T-cell (primary cell): ENCODE measurements at regions of chr3 and their contacts with region 1.

Region 1: DNA sequence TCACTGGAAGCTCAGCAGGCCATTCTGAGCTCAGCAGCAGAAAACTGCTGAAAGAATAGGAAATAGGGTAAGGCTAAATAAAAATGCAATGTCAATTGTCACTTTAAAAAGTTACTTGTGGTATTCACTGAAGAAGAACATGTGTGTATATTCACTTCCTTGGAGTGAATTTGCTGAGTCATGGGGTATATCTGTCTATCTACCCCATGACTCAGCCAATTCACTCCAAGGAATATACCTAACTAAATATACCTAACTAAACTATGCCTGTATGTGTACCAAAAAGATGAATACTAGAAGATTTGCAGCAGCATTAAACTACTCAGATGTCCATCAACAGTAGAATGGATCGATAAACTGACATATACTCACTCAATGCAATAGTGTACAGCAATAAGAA is 69.5 kb upstream of the KCNAB1 start:
- DNase-seq: no peak
- ATAC-seq: no peak
- H3K4me3 ChIP-seq: no peak overlapping the region
- H3K4me3 Mint-ChIP-seq: no peak overlapping the region
- H3K27ac ChIP-seq: no peak overlapping the region
- H3K27ac Mint-ChIP-seq: no peak overlapping the region
- H3K4me1 ChIP-seq: no peaks in the 10 kb centered on the region
- H3K4me1 Mint-ChIP-seq: no peaks in the 10 kb centered on the region
- H3K27me3 ChIP-seq: peaks cover 0 to 4% of the 10 kb centered on the region in 2 experiments
- H3K27me3 Mint-ChIP-seq: peaks cover 17 to 27% of the 10 kb centered on the region in 2 donors

Region 2: DNA sequence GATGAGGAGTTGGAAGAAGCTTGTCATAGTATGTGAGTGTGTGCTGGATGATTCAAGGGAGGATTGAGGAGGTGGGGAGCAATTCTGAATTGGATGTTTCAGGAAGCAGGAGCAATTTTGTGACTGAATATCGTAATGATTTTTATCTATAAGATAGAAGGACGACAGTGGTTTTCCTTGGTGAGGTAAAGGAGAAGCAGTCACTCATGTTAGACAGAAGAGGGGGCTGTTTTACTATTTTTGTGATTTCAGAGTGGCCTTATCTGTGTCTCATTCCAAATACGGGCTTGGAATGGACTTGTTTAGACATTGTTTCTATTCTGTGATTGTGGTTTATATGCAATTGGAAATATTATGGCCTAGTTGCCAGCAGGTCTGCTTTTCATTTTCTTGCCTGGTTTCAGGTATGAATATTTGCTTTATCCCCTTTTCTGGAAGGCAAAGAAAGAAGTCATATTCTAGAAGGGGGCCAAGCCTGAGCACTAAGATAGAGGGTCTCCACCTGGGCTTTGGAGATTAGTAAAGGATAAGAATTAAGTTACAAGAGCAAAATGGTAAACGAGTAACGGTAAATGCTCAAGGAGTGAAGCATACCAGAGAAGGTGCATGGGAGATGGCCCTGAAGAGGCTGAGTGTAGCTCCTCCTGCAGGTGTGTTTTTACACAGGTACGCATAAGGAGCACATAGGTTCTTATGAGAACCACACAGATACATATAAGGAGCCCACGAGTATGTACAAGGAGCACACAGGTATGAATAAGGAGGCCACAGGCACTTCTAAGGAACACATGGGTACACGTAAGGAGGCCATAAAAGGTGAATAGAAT is 55.2 kb before region 1 on chr3:
- CTCF ChIA-PET with region 1: no interaction called
- POLR2A ChIA-PET with region 1: no interaction called
- DNase-seq: peak in 1 of 35 experiments; percentile 22
- ATAC-seq: no peak
- H3K4me3 ChIP-seq: no peak overlapping the region
- H3K4me3 Mint-ChIP-seq: no peak overlapping the region
- H3K27ac ChIP-seq: no peak overlapping the region
- H3K27ac Mint-ChIP-seq: no peak overlapping the region
- H3K4me1 ChIP-seq: no peaks in the 10 kb centered on the region
- H3K4me1 Mint-ChIP-seq: peaks cover 0 to 2% (median 0%) of the 10 kb centered on the region in 3 donors
- H3K27me3 ChIP-seq: no peaks in the 10 kb centered on the region
- H3K27me3 Mint-ChIP-seq: peaks cover 0 to 5% of the 10 kb centered on the region in 2 donors

Region 3: DNA sequence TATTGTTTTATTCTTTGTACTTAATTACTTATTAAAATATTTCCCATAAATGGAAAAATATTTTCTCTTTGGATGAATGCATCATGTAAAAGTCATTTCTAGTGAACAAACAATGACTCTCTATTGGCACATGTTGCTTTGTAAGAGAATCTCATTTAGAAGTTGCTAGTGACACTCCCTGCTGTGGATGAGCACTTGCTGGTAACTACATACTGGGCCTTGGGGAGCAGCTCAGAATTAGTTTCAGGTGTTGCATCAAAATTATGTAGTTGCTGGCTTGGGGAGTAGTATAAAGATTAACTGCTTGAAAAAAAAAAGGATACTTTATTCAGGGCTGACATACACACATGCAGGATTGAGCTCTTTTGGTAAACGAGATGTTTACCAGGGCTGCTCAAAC is 10.9 kb before region 1 on chr3:
- CTCF ChIA-PET with region 1: interaction called, 3 to 6 read pairs
- POLR2A ChIA-PET with region 1: interaction called in 1 of 2 experiments, 10 read pairs
- DNase-seq: no peak
- ATAC-seq: no peak
- H3K4me3 ChIP-seq: no peak overlapping the region
- H3K4me3 Mint-ChIP-seq: no peak overlapping the region
- H3K27ac ChIP-seq: no peak overlapping the region
- H3K27ac Mint-ChIP-seq: no peak overlapping the region
- H3K4me1 ChIP-seq: no peaks in the 10 kb centered on the region
- H3K4me1 Mint-ChIP-seq: no peaks in the 10 kb centered on the region
- H3K27me3 ChIP-seq: peaks cover 0 to 10% of the 10 kb centered on the region in 2 experiments
- H3K27me3 Mint-ChIP-seq: peaks cover 7 to 18% of the 10 kb centered on the region in 2 donors

Region 4: GRCh38 chr3:156160647-156161046 is 109.7 kb after region 1 on chr3:
- CTCF ChIA-PET with region 1: no interaction called
- POLR2A ChIA-PET with region 1: no interaction called
- DNase-seq: peak in 2 of 35 experiments; percentile 5 to 30
- ATAC-seq: peak in 3 of 4 experiments; percentile 50 to 76 (median 70)
- H3K4me3 ChIP-seq: no peak overlapping the region
- H3K4me3 Mint-ChIP-seq: peak overlapping the region; percentile 4 to 66 (median 46)
- H3K27ac ChIP-seq: no peak overlapping the region
- H3K27ac Mint-ChIP-seq: peak overlapping the region; percentile 29 to 50
- H3K4me1 ChIP-seq: peaks cover 2 to 3% of the 10 kb centered on the region in 2 experiments
- H3K4me1 Mint-ChIP-seq: peaks cover 18 to 20% (median 20%) of the 10 kb centered on the region in 3 donors
- H3K27me3 ChIP-seq: no peaks in the 10 kb centered on the region
- H3K27me3 Mint-ChIP-seq: no peaks in the 10 kb centered on the region